Lower leg skin (tissue), 4 donors: ENCODE measurements at regions of chr1 and their contacts with region 1.

Region 1: DNA sequence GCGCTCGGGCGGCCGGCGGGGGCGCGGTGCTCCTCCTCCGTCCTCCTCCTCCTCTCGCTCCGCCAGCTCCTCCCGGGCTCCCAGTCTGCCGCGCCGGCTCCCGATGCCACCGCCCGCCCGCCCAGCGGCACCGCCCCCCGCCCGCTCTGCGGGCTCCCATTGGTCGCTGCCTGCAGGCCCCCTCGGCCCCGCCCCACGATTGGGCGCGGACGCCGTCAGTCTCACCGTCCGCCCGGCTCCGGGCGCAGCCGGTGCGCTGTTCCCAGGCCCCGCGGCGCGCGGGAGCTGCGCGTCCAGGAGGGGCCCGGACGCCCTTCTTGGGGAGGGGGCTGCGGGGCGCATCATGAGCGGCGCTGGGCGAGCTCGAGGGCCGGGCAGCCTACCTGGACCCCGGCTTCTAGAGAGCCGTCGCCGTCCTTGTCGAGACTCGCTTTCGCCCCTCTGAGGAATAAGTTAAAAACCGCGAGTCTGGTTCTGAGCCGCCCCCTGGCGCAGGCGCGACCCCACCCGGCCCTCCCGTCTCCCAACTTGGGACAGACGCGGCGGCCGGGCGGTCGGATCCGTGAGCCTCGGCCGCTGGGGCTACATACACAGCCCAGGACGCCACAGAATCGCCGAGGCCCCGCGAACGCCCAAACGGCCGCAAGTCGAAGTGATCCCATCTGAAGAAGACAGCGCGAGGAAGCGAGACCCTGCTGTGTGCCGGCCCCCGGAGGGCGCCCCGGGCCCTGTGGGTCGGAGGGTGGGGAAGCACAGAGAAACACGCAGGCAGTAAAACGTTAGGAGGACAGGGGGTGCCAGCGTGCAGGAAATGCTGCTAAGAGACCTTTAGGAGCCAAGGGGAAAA is at the start of gene SIPA1L2:
- DNase-seq: peak; percentile 91 to 98
- H3K4me3 ChIP-seq: peak within 1 kb of the TSS; percentile 62
- CTCF ChIP-seq: no peak
- POLR2A ChIP-seq: no peak
- total RNA-seq, gene SIPA1L2: 8.9 to 22.6 (median 16.6) TPM

Region 2: GRCh38 chr1:231866392-231867331 is 763.6 kb before region 1 on chr1:
- intact Hi-C with region 1: loop called (anchors 5 kb)
- DNase-seq: peak; percentile 43 to 93
- H3K4me3 ChIP-seq: no peak overlapping the region
- CTCF ChIP-seq: peak in 1 of 3 donors; percentile 60
- POLR2A ChIP-seq: no peak

Region 3: GRCh38 chr1:232844791-232845190 is 214.5 kb after region 1 on chr1:
- intact Hi-C with region 1: no loop called
- DNase-seq: no peak
- H3K4me3 ChIP-seq: no peak overlapping the region
- CTCF ChIP-seq: no peak
- POLR2A ChIP-seq: no peak

Region 4: GRCh38 chr1:233240829-233241682 is 610.8 kb after region 1 on chr1:
- intact Hi-C with region 1: loop called (anchors 5 kb)
- DNase-seq: peak; percentile 32 to 86
- H3K4me3 ChIP-seq: no peak overlapping the region
- CTCF ChIP-seq: peak in 1 of 3 donors; percentile 30
- POLR2A ChIP-seq: no peak